GM13976 (cell line): ENCODE measurements at regions of chr14 and their contacts with region 1.

Region 1: DNA sequence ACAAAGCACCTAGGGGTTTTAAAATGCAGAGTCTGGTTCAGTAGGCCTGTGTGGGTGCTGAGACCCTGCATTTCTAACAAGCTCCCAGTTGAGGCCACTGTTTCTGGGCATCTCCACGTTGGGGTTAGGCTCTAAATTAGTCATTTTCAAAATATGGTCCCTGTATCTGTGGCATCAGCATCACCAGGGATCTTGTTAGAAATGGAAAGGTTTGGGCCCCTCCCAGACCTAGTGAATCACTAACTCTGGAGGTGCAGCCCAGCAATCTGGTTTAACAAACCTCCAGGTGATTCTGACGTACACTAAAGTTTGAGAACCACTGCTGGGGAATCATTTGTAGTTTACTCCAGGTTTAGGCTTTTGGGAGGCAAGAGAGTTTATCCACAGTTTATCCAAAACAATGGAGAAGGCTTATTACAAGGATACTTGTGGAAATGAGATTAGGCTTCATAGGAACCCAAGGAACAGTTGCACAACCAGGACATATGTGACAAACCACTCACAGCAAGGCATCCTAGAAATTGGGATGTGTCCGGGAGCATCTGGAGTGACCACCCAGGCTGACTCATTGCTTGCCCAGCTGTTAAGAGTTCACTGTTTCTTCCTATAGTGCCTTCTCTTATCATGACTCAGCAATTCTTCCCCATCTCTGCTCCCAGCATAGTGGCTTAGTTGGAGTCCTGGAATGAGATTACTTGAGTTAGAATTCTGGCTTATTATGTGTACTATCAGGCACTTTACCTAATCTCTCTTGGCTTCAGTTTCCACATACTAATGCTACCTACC is 71.6 kb upstream of the STXBP6 start:
- DNase-seq: no peak
- CTCF ChIP-seq: no peak

Region 2: DNA sequence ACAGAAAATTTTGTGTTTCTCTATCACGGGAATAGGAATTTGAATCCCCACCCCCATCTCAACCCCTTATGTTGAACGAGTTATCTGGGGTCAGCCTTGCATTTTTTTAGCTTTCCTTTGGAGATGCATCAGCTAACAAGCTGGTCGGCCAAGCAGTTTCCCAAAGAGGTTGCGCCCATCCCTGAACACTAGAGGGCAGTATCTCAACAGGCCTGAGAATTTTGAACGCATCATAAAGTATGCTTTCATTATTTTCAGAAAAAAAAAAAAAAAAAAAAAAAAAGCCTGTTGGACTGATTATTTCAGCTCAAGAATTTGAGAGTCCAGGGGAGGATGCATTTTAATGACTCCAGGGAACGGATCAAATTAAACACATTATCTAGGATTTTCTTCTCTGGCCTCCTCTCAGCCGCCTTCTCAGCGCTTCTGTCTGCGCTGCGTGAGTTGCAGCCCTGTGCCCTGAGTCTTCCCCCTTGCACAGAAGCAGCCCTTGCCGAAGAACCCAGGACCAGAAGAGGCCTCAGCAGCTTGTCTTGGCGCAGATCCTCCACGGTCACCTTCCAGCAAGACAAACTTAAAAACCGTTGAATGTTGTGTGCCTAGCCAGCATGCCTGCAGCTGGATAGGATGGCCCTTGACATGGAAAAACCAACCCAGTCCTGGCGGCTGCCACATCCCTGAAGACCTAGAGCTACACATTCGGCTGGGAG is 411.0 kb before region 1 on chr14:
- in situ Hi-C with region 1: loop called (anchors 10 kb)
- DNase-seq: peak; percentile 65
- CTCF ChIP-seq: peak; percentile 85